SK-N-SH (cell line): ENCODE measurements at regions of chr17 and their contacts with region 1.

Region 1: DNA sequence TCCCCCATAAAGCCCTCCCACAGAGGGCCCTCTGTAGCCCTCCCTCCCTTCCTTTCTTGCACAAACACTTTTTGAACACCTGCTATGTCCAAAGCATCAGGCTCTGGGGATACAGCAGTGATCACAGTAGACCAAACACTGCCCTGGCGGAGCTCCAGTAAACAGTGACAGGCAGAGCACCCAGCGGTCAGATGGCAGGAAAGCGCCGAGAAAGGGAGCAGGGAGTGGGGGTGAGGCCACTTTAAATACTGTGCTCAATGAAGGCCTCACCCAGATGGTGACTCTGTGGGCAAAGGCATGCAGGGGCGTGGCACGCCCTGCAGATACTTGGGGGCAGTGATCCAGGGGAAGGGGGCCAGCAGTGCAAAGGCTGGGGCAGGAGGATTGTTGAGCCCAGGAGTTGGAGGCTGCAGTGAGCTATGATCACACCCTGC is 7.6 kb downstream of the PRR29 start:
- DNase-seq: peak; percentile 76
- H3K4me3 ChIP-seq: no peak overlapping the region
- H3K27ac ChIP-seq: peak overlapping the region in 1 of 2 experiments; percentile 53; a peak in 1 of 4 replicates
- H3K4me1 ChIP-seq: peaks cover 0 to 22% of the 10 kb centered on the region in 2 experiments; a peak in 1 of 4 replicates
- H3K27me3 ChIP-seq: no peaks in the 10 kb centered on the region
- CTCF ChIP-seq: no peak
- EP300 ChIP-seq: no peak
- RAD21 ChIP-seq: no peak

Region 2: DNA sequence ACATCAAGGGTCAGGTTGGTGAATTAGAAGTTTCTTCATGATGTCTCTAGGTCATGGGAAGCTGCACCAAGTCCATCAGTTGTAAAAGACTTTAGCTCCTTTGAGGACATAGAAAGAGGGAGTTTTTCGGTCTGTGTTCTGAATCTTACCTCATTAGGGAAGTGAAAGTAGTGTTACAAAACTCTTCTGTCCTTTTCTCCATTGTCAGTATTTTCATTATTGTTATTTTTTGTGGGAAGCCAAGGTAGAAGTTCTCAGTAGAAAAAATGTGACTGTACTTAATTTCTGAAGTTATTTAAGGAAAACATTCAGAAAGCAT is 359.3 kb before region 1 on chr17:
- CTCF ChIA-PET with region 1: no interaction called
- POLR2A ChIA-PET with region 1: no interaction called
- DNase-seq: no peak
- H3K4me3 ChIP-seq: no peak overlapping the region
- H3K27ac ChIP-seq: no peak overlapping the region
- H3K4me1 ChIP-seq: no peaks in the 10 kb centered on the region; a peak in 1 of 4 replicates
- H3K27me3 ChIP-seq: no peaks in the 10 kb centered on the region
- CTCF ChIP-seq: no peak
- EP300 ChIP-seq: no peak
- RAD21 ChIP-seq: no peak

Region 3: GRCh38 chr17:63881876-63882601 is 123.7 kb before region 1 on chr17 and contains the start of gene GH2:
- CTCF ChIA-PET with region 1: no interaction called
- POLR2A ChIA-PET with region 1: no interaction called
- DNase-seq: peak; percentile 85
- H3K4me3 ChIP-seq: no peak within 1 kb of the TSS
- H3K27ac ChIP-seq: no peak within 1 kb of the TSS
- H3K4me1 ChIP-seq: no peaks in the 10 kb centered on the region
- H3K27me3 ChIP-seq: peaks cover 5% of the 10 kb centered on the region
- CTCF ChIP-seq: peak; percentile 51
- EP300 ChIP-seq: no peak
- RAD21 ChIP-seq: no peak
- polyA plus RNA-seq, gene GH2: not detected in 2 replicates

Region 4: GRCh38 chr17:64020056-64020766 is 14.5 kb after region 1 on chr17 and contains the start of gene ICAM2:
- CTCF ChIA-PET with region 1: interaction called, 32 read pairs
- POLR2A ChIA-PET with region 1: no interaction called
- DNase-seq: no peak
- H3K4me3 ChIP-seq: no peak within 1 kb of the TSS
- H3K27ac ChIP-seq: no peak within 1 kb of the TSS
- H3K4me1 ChIP-seq: no peaks in the 10 kb centered on the region
- H3K27me3 ChIP-seq: no peaks in the 10 kb centered on the region
- CTCF ChIP-seq: no peak
- EP300 ChIP-seq: no peak
- RAD21 ChIP-seq: no peak
- polyA plus RNA-seq, gene ICAM2: 0.08 TPM in 1 of 2 replicates, not detected in the other

Region 5: DNA sequence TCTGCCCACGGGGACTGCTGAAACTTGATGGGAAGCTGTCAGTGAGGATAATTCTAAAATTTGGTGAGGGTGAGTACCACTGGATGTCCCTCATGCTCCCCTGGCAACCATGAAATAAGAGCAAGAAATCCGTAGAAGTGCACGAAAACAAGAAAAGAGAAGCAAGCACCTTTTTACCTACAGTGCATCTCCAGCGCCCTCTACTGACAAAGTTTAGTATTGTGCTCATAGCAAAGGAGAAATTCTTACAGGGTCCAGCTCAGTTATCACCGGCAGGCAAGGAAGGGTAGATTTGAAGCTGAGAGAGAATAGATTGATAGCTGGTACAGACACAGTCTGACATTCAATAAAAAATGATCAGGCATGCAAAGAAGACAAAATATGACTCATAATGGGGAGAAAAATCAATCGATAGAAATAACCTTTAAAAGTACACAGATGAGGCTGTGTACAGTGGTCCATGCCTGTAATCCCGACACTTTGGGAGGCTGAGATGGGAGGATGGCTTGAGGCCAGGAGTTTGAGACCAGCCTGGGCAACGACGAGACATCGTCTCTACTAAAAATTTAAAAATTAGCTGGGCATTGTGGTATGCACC is 285.6 kb after region 1 on chr17:
- CTCF ChIA-PET with region 1: no interaction called
- POLR2A ChIA-PET with region 1: no interaction called
- DNase-seq: no peak
- H3K4me3 ChIP-seq: no peak overlapping the region
- H3K27ac ChIP-seq: no peak overlapping the region
- H3K4me1 ChIP-seq: no peaks in the 10 kb centered on the region
- H3K27me3 ChIP-seq: no peaks in the 10 kb centered on the region
- CTCF ChIP-seq: peak; percentile 58
- EP300 ChIP-seq: no peak
- RAD21 ChIP-seq: peak; percentile 26